Activated CD4-positive, alpha-beta T cell treated with anti-CD3 and anti-CD28 coated beads for 36 hours (primary cell): ENCODE measurements at regions of chr3 and their contacts with region 1.

Region 1: DNA sequence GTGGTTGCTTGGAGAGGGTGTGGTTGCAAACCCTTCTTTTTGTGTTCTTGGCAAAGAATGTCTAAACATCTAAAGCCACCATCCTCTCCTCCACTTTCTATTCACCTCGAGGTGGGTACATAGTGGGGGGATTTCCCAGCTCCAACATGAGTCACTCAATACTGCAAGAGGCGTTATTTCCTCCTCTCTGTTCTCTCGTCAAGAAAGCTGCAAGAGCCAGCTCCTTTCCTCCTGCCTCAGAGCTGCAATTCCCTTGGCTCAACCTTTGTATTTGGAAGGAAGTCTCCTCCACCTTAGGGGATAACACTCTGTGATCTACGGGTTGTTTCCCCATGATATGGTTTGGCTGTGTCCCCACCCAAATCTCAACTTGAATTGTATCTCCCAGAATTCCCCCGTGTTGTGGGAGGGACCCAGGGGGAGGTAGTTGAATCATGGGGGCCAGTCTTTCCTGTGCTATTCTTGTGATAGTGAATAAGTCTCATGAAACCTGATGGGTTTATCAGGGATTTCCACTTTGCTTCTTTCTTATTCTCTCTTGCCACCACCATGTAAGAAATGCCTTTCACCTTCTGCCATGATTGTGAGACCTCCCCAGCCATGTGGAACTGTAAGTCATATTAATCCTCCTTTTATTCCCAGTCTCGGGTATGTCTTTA is 138.4 kb downstream of the PLCL2 start:
- DNase-seq: peak; percentile 70
- ATAC-seq: peak; percentile 94
- H3K4me3 Mint-ChIP-seq: peak overlapping the region; percentile 59
- H3K27ac Mint-ChIP-seq: peak overlapping the region; percentile 88
- H3K4me1 Mint-ChIP-seq: peaks cover 71% of the 10 kb centered on the region
- H3K27me3 Mint-ChIP-seq: no peaks in the 10 kb centered on the region

Region 2: DNA sequence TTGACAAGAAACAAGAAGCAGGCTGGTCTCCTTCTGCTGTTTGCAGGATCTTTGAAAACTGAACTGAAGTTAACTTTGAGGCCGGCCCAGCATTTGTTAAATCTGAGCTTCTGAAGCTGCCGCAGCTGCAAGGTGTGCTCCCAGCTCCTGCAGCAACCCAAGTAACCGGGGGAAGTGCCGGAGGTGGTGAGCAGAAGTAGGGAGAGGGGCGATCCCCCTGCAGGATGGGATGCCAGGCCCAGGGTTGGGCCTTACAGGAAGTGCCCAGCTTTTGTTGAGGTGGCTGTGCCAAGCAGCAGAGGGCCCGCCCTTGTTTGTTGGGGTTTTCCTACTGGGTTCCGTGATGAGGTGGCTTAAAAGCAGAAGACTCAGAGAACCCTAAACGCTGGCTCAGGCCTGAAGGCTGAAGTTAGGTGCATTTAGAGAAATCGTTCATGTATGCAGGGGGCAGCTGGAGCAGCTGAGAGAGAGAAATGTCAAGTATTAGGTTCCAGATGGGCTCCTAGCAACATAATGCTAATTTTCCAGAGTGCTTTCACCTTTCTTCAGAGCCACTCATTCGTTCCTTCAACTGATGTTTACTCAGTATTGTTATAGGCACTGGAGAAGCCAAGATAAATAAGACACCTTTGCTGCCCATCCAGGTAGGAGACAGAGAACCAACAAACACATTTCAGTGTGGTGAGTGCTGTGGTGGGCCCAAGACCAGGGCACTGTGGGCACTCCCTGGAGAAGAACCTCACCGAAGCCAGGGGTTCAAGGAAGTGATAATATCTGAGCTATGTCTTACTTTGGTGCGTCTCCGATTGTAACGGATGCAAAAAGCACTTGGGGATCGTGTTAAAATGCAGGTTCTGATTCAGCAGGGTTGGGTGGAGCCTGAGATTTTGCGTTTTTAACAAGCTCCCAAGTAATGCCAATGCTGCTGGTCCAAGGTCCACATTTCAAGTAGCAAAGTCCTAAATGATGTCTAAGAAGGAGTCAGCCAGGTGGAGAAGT is 180.6 kb before region 1 on chr3:
- CTCF ChIA-PET with region 1: interaction called, 4 read pairs
- POLR2A ChIA-PET with region 1: no interaction called
- intact Hi-C with region 1: loop called (anchors 2 to 10 kb)
- DNase-seq: peak; percentile 87
- ATAC-seq: peak; percentile 96
- H3K4me3 Mint-ChIP-seq: peak overlapping the region; percentile 69
- H3K27ac Mint-ChIP-seq: peak overlapping the region; percentile 95
- H3K4me1 Mint-ChIP-seq: peaks cover 75% of the 10 kb centered on the region
- H3K27me3 Mint-ChIP-seq: no peaks in the 10 kb centered on the region

Region 3: DNA sequence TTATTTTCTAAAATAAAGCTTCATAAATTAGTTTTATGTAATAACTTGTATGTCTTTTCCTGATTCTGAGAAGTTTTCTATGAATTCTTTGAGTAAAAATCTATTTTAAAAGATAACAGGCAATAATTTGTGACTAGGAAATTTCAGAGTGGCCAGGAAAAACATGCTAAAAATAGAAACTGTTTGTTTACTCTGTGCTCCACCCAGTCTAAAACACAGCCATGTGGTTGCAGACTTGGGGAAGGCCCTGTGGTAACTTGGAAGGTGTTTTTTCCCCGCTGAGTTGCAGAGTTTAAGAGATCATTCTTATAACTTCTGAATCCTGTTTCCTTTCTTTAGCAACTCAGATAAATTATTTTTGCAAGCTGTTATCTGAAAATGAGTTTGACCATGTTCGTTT is 116.5 kb before region 1 on chr3:
- CTCF ChIA-PET with region 1: interaction called, 3 read pairs
- POLR2A ChIA-PET with region 1: no interaction called
- intact Hi-C with region 1: loop called (anchors 5 kb)
- DNase-seq: no peak
- ATAC-seq: peak; percentile 19
- H3K4me3 Mint-ChIP-seq: no peak overlapping the region
- H3K27ac Mint-ChIP-seq: no peak overlapping the region
- H3K4me1 Mint-ChIP-seq: peaks cover 83% of the 10 kb centered on the region
- H3K27me3 Mint-ChIP-seq: no peaks in the 10 kb centered on the region

Region 4: DNA sequence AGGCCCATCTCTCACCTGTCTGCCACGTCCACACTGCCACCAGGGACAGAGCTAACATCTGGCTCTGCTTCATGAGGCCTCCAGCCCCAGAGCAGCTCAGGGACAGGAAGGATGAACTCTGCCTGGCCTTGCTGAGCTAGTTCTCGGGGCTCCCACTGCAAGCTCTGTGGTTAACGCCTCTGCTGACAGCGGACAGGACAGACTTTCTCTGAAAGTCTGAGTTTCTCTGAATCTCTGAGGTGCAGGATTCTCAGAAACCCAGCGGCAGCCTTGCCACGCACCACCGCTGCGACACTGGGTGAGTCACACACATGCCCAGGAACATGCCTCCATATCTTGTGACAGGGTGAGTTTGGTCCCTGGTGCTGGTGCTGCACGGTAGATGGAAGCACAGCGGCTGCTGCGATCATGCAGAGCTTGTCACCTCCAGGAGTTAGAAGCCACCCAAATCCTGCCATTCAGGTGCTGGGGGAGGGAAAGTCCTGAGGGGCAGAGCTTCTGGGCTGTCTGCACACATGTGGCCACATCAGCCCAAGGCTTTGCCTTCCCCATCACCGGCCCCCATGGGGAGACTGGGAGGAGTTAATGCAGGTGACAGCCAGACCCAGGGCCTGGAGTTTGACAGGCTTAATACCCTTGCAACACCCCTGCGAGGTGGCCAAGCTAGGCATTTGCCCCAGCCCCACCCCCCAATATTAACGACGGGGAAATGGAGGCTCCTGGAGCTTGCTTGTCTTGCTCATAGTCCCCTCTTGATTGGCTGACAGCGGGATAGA is 128.7 kb after region 1 on chr3:
- CTCF ChIA-PET with region 1: interaction called, 3 read pairs
- POLR2A ChIA-PET with region 1: interaction called, 6 read pairs
- intact Hi-C with region 1: loop called in 1 of 2 experiments (anchors 2 kb)
- DNase-seq: peak; percentile 94
- ATAC-seq: peak; percentile 94
- H3K4me3 Mint-ChIP-seq: peak overlapping the region; percentile 52
- H3K27ac Mint-ChIP-seq: peak overlapping the region; percentile 88
- H3K4me1 Mint-ChIP-seq: peaks cover 29% of the 10 kb centered on the region
- H3K27me3 Mint-ChIP-seq: no peaks in the 10 kb centered on the region